PC-3 (cell line): ENCODE measurements at regions of chr18 and their contacts with region 1.

Region 1: DNA sequence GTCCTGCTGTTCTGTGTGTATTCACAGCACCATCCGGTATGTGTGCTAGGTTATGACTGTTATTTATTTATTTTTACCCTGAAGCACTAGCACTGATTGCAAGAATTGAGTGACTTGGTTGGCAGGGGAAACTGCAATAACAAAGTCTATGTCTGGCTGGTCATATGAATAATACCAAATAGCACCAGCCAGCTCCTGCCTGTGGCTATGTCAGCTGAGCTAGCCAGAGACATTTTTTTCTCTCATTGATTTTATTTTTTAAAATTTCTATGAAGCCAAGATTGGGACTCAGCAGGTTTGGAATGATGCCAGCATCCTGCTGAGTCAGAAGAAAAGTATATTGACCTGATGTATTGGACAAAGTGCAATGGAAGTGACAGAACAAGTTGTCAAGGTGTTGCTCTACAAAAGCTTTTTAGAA is 188.5 kb upstream of the CDH2 start:
- DNase-seq: peak; percentile 93
- ATAC-seq: peak; percentile 80
- H3K4me3 ChIP-seq: no peak overlapping the region
- H3K27ac ChIP-seq: peak overlapping the region; percentile 53
- H3K4me1 ChIP-seq: peaks cover 23% of the 10 kb centered on the region
- H3K27me3 ChIP-seq: no peaks in the 10 kb centered on the region
- CTCF ChIP-seq: no peak

Region 2: GRCh38 chr18:28657966-28658365 is 292.5 kb after region 1 on chr18:
- CTCF ChIA-PET with region 1: no interaction called
- POLR2A ChIA-PET with region 1: no interaction called
- intact Hi-C with region 1: loop called (anchors 10 kb)
- DNase-seq: peak; percentile 55
- ATAC-seq: peak; percentile 67
- H3K4me3 ChIP-seq: no peak overlapping the region
- H3K27ac ChIP-seq: no peak overlapping the region
- H3K4me1 ChIP-seq: peaks cover 22% of the 10 kb centered on the region
- H3K27me3 ChIP-seq: no peaks in the 10 kb centered on the region
- CTCF ChIP-seq: no peak